GM12878 (cell line): ENCODE measurements at regions of chr12 and their contacts with region 1.

Region 1: DNA sequence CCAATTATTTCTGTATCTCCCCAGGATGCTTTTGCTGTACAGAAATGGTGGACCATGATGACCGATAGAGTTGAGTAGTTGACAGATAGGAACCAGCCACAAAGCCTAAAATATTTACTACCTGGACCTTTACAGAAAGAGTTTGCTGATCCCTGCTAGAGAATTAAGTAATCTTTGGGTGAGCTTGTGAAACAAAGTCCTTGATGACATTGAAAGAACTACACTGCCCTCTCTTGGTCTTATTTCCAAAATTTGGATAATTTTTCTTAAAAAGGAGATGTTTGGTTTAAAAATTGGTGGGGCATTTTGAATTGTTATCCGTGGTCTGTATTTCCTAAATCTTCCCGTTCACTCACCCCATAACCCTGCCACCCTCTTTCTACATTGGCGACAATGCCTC is 13.7 kb upstream of the TCTN1 start:
- DNase-seq: no peak
- ATAC-seq: peak; percentile 61
- H3K4me3 ChIP-seq: no peak overlapping the region
- H3K27ac ChIP-seq: no peak overlapping the region
- H3K4me1 ChIP-seq: peaks cover 13% of the 10 kb centered on the region
- H3K27me3 ChIP-seq: no peaks in the 10 kb centered on the region
- CTCF ChIP-seq: peak; percentile 18 to 69 (median 42); a peak in 4 of 6 replicates
- EP300 ChIP-seq: no peak
- POLR2A ChIP-seq: no peak
- RAD21 ChIP-seq: peak; percentile 85

Region 2: DNA sequence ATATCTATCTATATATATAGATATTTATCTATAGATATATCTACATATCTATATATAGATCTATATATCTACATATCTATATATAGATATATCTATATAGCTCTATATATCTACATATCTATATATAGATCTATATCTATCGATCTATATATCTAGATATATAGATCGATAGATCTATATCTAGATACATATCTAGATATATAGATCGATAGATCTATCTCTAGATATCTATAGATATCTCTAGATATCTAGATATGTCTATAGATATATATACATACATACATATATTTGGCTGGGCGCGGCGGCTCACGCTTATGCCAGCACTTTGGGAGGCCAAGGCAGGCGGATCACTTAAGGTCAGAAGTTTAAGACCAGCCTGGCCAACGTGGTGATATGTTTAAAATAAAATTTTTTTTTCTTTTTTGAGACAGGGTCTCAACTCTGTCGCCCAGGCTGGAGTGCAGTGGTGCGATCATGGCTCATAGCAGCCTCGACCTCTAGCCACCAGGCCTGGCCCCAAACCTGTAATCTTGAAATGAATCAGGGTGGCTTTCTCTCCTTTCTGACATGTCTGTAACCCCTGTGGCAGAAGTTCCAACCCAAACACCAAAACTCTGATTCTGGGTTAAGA is 168.2 kb before region 1 on chr12:
- CTCF ChIA-PET with region 1: interaction called, 36 read pairs
- POLR2A ChIA-PET with region 1: no interaction called
- RAD21 ChIA-PET with region 1: interaction called, 11 read pairs
- SMC1A ChIA-PET with region 1: interaction called, 12 read pairs
- in situ Hi-C with region 1: no loop called
- intact Hi-C with region 1: no loop called
- DNase-seq: no peak
- ATAC-seq: peak; percentile 38; the same call in 1 of the 3 replicates
- H3K4me3 ChIP-seq: no peak overlapping the region
- H3K27ac ChIP-seq: no peak overlapping the region
- H3K4me1 ChIP-seq: peaks cover 5% of the 10 kb centered on the region
- H3K27me3 ChIP-seq: no peaks in the 10 kb centered on the region
- CTCF ChIP-seq: no peak
- EP300 ChIP-seq: no peak
- POLR2A ChIP-seq: no peak
- RAD21 ChIP-seq: no peak

Region 3: GRCh38 chr12:110501752-110502738 is 98.2 kb before region 1 on chr12 and contains the starts of genes RAD9B and VPS29:
- CTCF ChIA-PET with region 1: interaction called, 462 read pairs
- POLR2A ChIA-PET with region 1: interaction called, 8 read pairs
- RAD21 ChIA-PET with region 1: interaction called, 70 read pairs
- SMC1A ChIA-PET with region 1: interaction called, 492 read pairs
- in situ Hi-C with region 1: no loop called
- intact Hi-C with region 1: no loop called
- DNase-seq: peak; percentile 97
- ATAC-seq: peak; percentile 98
- H3K4me3 ChIP-seq: peak within 1 kb of the TSS; percentile 97
- H3K27ac ChIP-seq: peak within 1 kb of the TSS; percentile 92
- H3K4me1 ChIP-seq: peaks cover 4% of the 10 kb centered on the region
- H3K27me3 ChIP-seq: no peaks in the 10 kb centered on the region
- CTCF ChIP-seq: no peak
- EP300 ChIP-seq: peak in 1 of 2 experiments; percentile 81; a peak in 2 of 4 replicates
- POLR2A ChIP-seq: peak; percentile 99
- RAD21 ChIP-seq: no peak
- polyA plus RNA-seq, gene RAD9B: 1.2 to 2.0 TPM
- polyA plus RNA-seq, gene VPS29: 290 to 405 TPM

Region 4: DNA sequence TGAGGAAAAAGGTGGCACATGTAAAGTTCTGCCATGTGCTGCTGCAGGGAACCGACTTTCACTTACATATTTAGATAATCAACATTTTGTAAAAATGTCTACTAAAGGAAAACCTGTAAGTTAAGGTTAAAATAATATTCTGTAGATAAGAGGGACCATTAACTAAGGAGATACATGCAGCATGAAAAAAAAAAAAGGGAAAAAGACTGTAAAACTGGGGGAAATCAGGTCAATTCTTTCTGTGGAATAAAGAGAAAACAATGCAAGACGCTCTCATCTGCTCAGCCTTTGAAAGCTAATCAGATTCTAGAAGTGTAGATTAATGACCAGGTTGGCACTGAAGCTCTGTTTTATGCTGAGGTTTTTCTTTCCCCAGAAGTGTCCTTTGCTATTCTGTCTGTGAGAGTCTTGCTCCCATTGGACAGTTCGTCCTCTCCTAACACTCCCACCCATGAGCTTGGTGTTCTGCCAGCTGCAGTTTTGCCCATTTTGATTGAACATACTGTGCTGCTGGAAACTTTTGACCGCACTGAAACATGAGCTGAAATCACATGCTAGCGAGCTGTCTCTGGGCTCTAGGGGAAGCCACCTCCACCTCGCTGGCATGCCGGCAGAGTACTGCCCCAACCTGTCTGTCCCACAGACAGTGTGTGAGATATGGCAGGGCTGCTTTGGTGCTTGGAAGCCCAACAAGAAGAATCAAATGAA is 56.8 kb before region 1 on chr12:
- CTCF ChIA-PET with region 1: interaction called, 110 read pairs
- POLR2A ChIA-PET with region 1: interaction called, 3 read pairs
- RAD21 ChIA-PET with region 1: interaction called, 16 read pairs
- SMC1A ChIA-PET with region 1: interaction called, 92 read pairs
- in situ Hi-C with region 1: no loop called
- intact Hi-C with region 1: no loop called
- DNase-seq: peak; percentile 90
- ATAC-seq: peak; percentile 92
- H3K4me3 ChIP-seq: no peak overlapping the region; the same call in 1 of the 2 replicates
- H3K27ac ChIP-seq: peak overlapping the region; percentile 94
- H3K4me1 ChIP-seq: peaks cover 28% of the 10 kb centered on the region
- H3K27me3 ChIP-seq: no peaks in the 10 kb centered on the region
- CTCF ChIP-seq: no peak
- EP300 ChIP-seq: peak in 1 of 2 experiments; percentile 53; a peak in 1 of 4 replicates
- POLR2A ChIP-seq: 0 out of 2 replicates have a peak, but pooled peaks have one; percentile 26
- RAD21 ChIP-seq: no peak

Region 5: DNA sequence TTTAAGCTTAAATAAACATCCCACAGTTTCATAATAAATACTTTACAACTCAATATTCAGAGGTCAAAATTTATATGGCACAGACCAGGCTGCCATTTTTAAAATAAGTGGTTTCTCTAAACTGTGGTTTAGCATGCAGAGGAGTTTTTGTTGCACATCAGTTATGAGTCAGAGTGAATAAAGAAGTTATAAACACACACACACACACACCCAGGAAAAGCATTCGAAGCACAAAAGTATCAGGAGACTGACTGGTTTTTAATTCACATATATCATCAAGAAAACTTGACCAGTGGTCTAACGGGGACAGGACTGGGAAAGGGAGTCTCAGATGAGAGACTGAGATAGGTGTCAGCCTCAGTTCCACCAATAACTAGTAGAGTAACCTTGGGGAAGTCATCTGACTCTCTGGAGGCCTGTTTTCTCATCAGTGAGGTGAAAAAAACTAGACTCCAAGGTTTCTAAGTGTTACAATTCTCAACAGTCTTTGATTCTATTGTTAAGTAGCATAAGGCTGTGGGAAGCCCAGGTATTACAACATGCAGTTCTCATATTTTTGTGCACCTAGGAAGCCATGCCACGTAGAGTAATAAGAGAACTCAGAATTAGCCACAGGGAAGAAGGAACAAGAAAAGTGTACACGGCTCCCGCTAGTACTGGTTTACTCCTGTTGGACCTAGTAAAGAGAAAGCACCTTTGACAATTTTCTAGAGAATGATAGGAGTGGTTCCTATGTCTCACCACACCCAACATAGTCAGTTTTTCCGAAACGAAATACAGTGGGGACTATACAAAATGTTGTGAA is 22.3 kb before region 1 on chr12:
- CTCF ChIA-PET with region 1: interaction called, 40 read pairs
- POLR2A ChIA-PET with region 1: interaction called, 7 read pairs
- RAD21 ChIA-PET with region 1: interaction called, 44 read pairs
- SMC1A ChIA-PET with region 1: interaction called, 35 read pairs
- in situ Hi-C with region 1: no loop called
- intact Hi-C with region 1: no loop called
- DNase-seq: peak; percentile 84
- ATAC-seq: peak; percentile 45
- H3K4me3 ChIP-seq: peak overlapping the region; percentile 82
- H3K27ac ChIP-seq: peak overlapping the region; percentile 95
- H3K4me1 ChIP-seq: peaks cover 12% of the 10 kb centered on the region
- H3K27me3 ChIP-seq: no peaks in the 10 kb centered on the region
- CTCF ChIP-seq: no peak
- EP300 ChIP-seq: peak; percentile 67 to 76; a peak in 2 of 4 replicates
- POLR2A ChIP-seq: no peak
- RAD21 ChIP-seq: no peak

Region 6: DNA sequence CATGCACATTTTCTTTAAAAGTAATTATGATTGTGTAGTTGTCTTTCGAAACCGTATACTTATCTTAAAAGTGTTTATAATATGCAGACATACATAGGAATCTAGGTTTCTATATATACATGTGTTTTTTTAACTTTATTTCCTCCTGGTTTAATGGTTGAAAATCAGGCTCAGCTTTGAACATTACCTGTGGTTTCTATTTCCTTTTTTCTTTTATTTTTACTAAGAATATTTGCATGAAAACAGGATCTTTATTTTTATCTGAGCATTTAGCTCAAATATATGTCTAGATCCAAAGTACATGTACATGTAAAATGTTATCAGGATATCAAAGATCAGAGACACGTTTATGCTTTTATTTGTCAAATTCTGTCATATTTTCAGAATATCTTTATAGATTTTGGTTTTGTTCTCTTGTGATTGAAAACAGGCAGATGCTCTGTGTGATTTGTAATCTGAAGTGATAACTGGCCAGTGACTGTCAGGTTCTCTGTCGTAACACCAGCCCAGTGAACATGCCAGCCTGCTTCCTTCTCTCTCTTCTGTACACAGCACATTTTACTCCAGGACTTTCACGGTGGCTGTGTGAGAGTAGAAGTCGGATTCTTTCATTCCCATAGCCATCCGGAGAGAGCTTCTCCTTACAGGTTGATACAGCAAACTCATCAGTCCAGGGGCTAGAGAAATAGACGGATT is 27.4 kb after region 1 on chr12:
- CTCF ChIA-PET with region 1: interaction called, 12 read pairs
- POLR2A ChIA-PET with region 1: no interaction called
- RAD21 ChIA-PET with region 1: no interaction called
- SMC1A ChIA-PET with region 1: interaction called, 9 read pairs
- in situ Hi-C with region 1: no loop called
- intact Hi-C with region 1: no loop called
- DNase-seq: no peak
- ATAC-seq: peak; percentile 77
- H3K4me3 ChIP-seq: peak overlapping the region; percentile 23; the same call in 1 of the 2 replicates
- H3K27ac ChIP-seq: peak overlapping the region; percentile 16
- H3K4me1 ChIP-seq: peaks cover 11% of the 10 kb centered on the region
- H3K27me3 ChIP-seq: no peaks in the 10 kb centered on the region
- CTCF ChIP-seq: no peak
- EP300 ChIP-seq: no peak
- POLR2A ChIP-seq: no peak
- RAD21 ChIP-seq: no peak

Region 7: DNA sequence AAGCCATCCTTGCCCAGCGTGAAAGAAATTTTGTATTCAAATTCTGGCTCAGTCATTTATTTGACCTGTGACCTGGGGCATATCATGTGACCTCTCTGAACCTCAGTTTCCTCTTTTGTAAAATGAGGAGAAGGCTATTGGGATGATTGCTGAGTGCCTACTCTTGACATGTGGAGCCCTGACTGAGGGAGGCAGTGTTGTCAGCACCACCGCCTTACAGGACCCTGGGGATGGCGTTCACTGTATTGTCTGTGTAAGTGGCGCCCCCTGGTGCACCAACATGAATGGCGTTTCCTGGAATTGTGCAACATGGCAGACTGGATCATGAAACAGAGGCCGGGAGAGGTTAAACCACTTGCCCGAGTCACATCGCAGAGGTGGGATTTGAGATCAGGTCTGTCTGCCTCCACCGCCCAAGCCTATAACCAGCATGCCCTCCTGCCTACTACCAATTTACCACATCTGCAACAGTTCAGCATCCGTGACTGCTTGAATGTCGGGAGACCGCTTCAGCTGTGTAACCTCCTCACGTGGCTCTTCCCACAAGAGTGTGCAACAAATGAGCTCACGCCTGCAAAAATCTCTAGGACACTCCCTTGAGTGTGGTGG is 226.4 kb after region 1 on chr12:
- CTCF ChIA-PET with region 1: interaction called, 36 read pairs
- POLR2A ChIA-PET with region 1: no interaction called
- RAD21 ChIA-PET with region 1: interaction called, 27 read pairs
- SMC1A ChIA-PET with region 1: interaction called, 6 read pairs
- in situ Hi-C with region 1: no loop called
- intact Hi-C with region 1: loop called (anchors 1 kb)
- DNase-seq: peak; percentile 70
- ATAC-seq: peak; percentile 99
- H3K4me3 ChIP-seq: no peak overlapping the region
- H3K27ac ChIP-seq: no peak overlapping the region
- H3K4me1 ChIP-seq: peaks cover 10% of the 10 kb centered on the region; the same call in 1 of the 2 replicates
- H3K27me3 ChIP-seq: no peaks in the 10 kb centered on the region
- CTCF ChIP-seq: peak; percentile 89 to 99 (median 97)
- EP300 ChIP-seq: no peak
- POLR2A ChIP-seq: no peak
- RAD21 ChIP-seq: peak; percentile 98